Adrenal gland (tissue), 19 donors: ENCODE measurements at regions of chr17 and their contacts with region 1.

Region 1: DNA sequence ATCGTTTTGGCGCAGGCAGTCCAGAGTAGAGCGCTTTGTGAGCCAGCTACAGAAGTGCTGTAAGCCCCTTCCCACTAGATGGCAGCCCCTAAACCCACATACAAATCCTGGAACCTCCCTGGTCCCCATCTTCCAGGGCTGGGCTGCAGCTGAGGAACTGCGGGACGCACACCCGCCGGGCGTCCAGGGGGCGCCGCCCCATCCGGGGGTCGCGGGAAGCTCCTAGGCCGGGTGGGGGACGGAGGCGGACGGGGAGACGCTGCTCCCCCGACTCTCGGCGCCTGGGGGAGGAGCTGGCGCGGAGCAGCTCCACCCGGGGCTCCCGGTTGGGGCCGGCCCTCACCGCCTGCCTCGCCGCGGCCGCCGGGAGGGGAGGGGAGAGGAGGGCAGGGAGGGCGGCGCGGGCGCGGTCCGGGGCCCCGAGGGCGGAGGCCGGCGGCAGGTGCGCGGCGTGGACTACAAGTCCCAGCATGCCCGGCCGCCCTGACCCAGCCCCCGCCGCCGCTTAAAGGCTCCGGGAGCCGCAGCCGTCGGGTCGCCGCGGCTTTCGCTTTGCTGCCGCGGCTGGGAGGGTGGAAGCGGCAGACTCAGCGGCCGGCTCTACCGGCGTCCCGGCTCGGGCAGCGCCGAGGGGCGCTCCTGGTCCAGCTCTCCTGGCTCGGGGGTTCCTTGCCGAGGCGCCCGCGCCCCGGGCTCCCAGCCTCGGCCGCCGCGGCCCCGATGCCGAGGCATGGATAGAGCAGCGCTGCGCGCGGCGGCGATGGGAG is at the start of gene KSR1:
- DNase-seq: peak; percentile 76 to 89 (median 87)
- H3K4me3 ChIP-seq: peak within 1 kb of the TSS; percentile 71 to 91 (median 87)
- H3K27ac ChIP-seq: peak within 1 kb of the TSS; percentile 59 to 84 (median 82)
- H3K4me1 ChIP-seq: peaks cover 9 to 32% of the 10 kb centered on the region in 2 donors
- H3K27me3 ChIP-seq: no peaks in the 10 kb centered on the region
- CTCF ChIP-seq: peak in 5 of 6 experiments; percentile 20 to 45 (median 36)
- POLR2A ChIP-seq: peak; percentile 79 to 87
- total RNA-seq, gene KSR1: 16.0 to 50.4 (median 37.8) TPM

Region 2: DNA sequence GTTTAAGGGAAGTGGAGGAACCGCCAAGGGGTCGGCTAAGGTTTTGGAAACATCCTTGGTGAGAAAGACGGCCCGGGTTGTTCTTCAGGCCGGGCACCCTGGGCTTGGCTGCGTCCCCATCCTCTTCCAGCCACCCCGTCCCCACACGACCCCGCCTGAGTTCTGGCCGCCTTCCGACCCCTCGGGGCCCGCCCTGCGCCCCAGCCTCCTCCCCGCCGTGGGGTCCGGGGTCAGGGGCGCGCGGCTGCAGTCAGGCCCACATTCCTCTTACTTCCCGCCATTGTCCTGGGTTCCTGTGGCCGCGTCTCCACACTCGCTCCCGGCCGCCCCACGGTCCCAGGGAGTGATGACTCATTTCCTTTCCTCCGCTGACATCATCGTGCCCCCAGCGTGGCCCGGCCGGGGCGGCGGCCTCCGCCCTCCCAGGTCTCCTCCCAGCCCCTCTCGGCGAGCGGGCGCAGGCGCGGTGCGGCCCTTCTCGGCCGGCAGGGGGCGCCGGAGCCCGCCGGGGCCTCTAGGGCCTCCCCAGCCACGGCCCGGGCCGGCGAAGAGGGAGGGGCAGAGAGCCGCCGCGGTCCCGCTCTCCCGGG is 102.5 kb before region 1 on chr17:
- intact Hi-C with region 1: loop called in 1 of 2 experiments (anchors 10 kb)
- DNase-seq: peak; percentile 94 to 96 (median 94)
- H3K4me3 ChIP-seq: peak overlapping the region in 2 of 4 donors; percentile 50 to 57
- H3K27ac ChIP-seq: peak overlapping the region; percentile 7 to 92 (median 88)
- H3K4me1 ChIP-seq: peaks cover 2 to 21% of the 10 kb centered on the region in 2 donors
- H3K27me3 ChIP-seq: no peaks in the 10 kb centered on the region
- CTCF ChIP-seq: peak; percentile 18 to 100 (median 72)
- POLR2A ChIP-seq: peak; percentile 86 to 92

Region 3: DNA sequence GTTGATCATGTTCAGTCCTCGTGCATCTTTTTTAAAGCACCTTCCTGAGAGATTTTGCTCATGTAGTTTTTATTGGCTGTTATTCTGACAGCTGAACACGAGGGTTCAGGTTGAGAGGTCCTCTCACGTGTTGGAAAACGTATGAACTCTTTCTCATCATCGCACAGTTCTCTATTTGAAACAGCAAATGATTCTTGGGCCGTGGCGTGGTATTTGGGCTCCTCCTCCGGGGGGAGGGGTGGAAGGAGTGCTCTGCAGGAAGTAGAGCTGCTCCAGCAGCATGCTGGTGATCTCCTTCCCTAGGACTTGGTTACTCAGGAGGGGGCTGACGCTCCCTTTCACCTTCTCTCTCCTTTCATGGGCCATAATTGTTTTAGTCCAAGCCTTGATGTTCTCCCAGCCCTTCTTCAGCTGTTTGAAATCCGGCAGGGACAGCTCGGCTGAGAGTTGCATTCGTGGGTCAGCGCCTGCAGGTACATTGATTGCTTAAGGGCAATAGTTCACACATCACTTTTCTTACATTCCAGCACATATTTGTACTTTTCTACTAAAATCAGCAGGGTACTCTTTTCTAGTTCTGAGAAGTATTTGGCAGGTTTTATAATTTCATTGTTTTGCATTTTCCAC is 70.6 kb after region 1 on chr17:
- intact Hi-C with region 1: loop called in 1 of 2 experiments (anchors 10 kb)
- DNase-seq: peak in 4 of 7 donors; percentile 31 to 51 (median 46)
- H3K4me3 ChIP-seq: no peak overlapping the region
- H3K27ac ChIP-seq: no peak overlapping the region
- H3K4me1 ChIP-seq: peaks cover 0 to 62% of the 10 kb centered on the region in 2 donors
- H3K27me3 ChIP-seq: no peaks in the 10 kb centered on the region
- CTCF ChIP-seq: no peak
- POLR2A ChIP-seq: no peak

Region 4: DNA sequence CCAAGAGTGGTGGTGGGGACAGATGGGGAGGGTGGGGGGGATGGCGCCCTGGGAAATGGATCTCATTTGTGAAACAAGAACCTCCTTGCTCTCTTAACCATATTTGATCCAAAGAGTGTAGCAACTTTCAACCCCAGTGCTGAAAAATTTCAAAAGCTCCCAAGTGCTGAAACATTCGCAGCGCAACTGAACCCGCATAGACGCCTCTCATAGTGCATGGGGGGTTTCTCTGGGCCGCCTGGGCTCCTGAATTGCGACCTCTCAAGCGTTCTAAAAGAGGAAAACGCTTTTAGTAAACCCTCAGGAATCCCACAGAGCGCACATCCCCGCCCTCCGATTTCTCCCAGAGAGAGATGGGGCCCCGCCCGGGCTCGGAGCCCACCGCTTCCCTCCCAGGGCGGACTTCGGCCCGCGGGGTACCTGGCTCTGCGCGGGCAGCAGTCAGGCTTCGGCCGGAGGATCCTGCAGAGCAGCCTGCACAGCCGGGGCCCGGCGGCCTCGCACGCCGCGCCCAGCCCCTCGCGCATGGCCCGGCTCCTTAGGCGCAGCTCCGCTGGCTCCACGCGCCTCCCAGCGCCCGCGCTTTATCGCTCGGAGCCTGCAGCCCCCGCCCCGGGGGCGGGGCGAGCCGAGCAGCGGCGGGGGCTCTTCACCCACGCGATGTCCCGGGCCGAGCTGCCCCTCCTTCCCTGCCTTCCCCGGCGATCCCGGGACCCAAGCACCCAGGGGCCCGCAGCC is 337.2 kb after region 1 on chr17:
- intact Hi-C with region 1: no loop called
- DNase-seq: peak in 1 of 7 donors; percentile 31
- H3K4me3 ChIP-seq: peak overlapping the region in 1 of 4 donors; percentile 37
- H3K27ac ChIP-seq: no peak overlapping the region
- H3K4me1 ChIP-seq: peaks cover 0 to 9% of the 10 kb centered on the region in 2 donors
- H3K27me3 ChIP-seq: no peaks in the 10 kb centered on the region
- CTCF ChIP-seq: no peak
- POLR2A ChIP-seq: no peak